ENCODE measurements at regions of chr11 and their contacts with region 1.

Region 1: GRCh38 chr11:100575870-100576705 is 111.0 kb upstream of the ARHGAP42 start:
- DNase-seq: peak in 1 of 2 experiments; percentile 64
- H3K4me3 ChIP-seq: no peak overlapping the region
- H3K4me3 Mint-ChIP-seq: no peak overlapping the region
- H3K27ac Mint-ChIP-seq: no peak overlapping the region
- H3K4me1 ChIP-seq: no peaks in the 10 kb centered on the region
- H3K4me1 Mint-ChIP-seq: no peaks in the 10 kb centered on the region
- H3K27me3 ChIP-seq: no peaks in the 10 kb centered on the region
- H3K27me3 Mint-ChIP-seq: peaks cover 2% of the 10 kb centered on the region
- CTCF ChIP-seq: peak; percentile 80 to 93

Region 2: GRCh38 chr11:99739464-99740089 is 836.5 kb before region 1 on chr11:
- CTCF ChIA-PET with region 1: no interaction called
- POLR2A ChIA-PET with region 1: no interaction called
- intact Hi-C with region 1: loop called (anchors 1 kb)
- DNase-seq: peak in 1 of 2 experiments; percentile 63
- H3K4me3 ChIP-seq: no peak overlapping the region
- H3K4me3 Mint-ChIP-seq: no peak overlapping the region
- H3K27ac Mint-ChIP-seq: no peak overlapping the region
- H3K4me1 ChIP-seq: no peaks in the 10 kb centered on the region
- H3K4me1 Mint-ChIP-seq: no peaks in the 10 kb centered on the region
- H3K27me3 ChIP-seq: no peaks in the 10 kb centered on the region
- H3K27me3 Mint-ChIP-seq: peaks cover 8% of the 10 kb centered on the region
- CTCF ChIP-seq: peak; percentile 77 to 85

Region 3: DNA sequence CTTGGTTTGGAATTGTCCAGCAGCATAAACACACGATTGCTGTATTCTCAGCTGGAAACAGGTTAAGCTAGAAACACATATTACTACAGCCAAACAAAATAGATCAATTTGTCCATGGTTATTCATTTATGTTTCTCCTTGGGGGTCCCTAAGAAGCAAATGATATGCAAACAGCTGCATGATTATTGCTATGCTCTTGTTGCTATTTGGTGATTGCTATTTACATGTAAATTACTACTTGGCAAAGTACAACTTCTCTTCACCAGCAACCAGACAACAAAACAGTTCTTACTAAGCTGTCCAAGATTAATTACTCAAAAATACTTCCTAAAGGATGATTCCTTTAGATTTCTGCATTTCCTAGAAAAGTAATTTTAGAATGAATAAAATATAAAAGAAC is 456.9 kb before region 1 on chr11:
- CTCF ChIA-PET with region 1: no interaction called
- POLR2A ChIA-PET with region 1: no interaction called
- intact Hi-C with region 1: loop called (anchors 1 kb)
- DNase-seq: no peak
- H3K4me3 ChIP-seq: no peak overlapping the region
- H3K4me3 Mint-ChIP-seq: no peak overlapping the region
- H3K27ac Mint-ChIP-seq: no peak overlapping the region
- H3K4me1 ChIP-seq: no peaks in the 10 kb centered on the region
- H3K4me1 Mint-ChIP-seq: no peaks in the 10 kb centered on the region
- H3K27me3 ChIP-seq: no peaks in the 10 kb centered on the region
- H3K27me3 Mint-ChIP-seq: peaks cover 3% of the 10 kb centered on the region
- CTCF ChIP-seq: no peak

Region 4: GRCh38 chr11:100328658-100329315 is 247.3 kb before region 1 on chr11:
- CTCF ChIA-PET with region 1: no interaction called
- POLR2A ChIA-PET with region 1: no interaction called
- intact Hi-C with region 1: loop called (anchors 1 kb)
- DNase-seq: peak; percentile 23 to 38
- H3K4me3 ChIP-seq: no peak overlapping the region
- H3K4me3 Mint-ChIP-seq: no peak overlapping the region
- H3K27ac Mint-ChIP-seq: no peak overlapping the region
- H3K4me1 ChIP-seq: no peaks in the 10 kb centered on the region; the same call in 1 of the 2 replicates
- H3K4me1 Mint-ChIP-seq: no peaks in the 10 kb centered on the region
- H3K27me3 ChIP-seq: no peaks in the 10 kb centered on the region
- H3K27me3 Mint-ChIP-seq: peaks cover 2% of the 10 kb centered on the region
- CTCF ChIP-seq: no peak

Region 5: GRCh38 chr11:100525635-100526034 is 50.5 kb before region 1 on chr11:
- CTCF ChIA-PET with region 1: no interaction called
- POLR2A ChIA-PET with region 1: no interaction called
- intact Hi-C with region 1: no loop called
- DNase-seq: peak in 1 of 2 experiments; percentile 35
- H3K4me3 ChIP-seq: no peak overlapping the region
- H3K4me3 Mint-ChIP-seq: no peak overlapping the region
- H3K27ac Mint-ChIP-seq: no peak overlapping the region
- H3K4me1 ChIP-seq: no peaks in the 10 kb centered on the region
- H3K4me1 Mint-ChIP-seq: no peaks in the 10 kb centered on the region
- H3K27me3 ChIP-seq: no peaks in the 10 kb centered on the region
- H3K27me3 Mint-ChIP-seq: no peaks in the 10 kb centered on the region
- CTCF ChIP-seq: peak; percentile 19 to 44

Region 6: DNA sequence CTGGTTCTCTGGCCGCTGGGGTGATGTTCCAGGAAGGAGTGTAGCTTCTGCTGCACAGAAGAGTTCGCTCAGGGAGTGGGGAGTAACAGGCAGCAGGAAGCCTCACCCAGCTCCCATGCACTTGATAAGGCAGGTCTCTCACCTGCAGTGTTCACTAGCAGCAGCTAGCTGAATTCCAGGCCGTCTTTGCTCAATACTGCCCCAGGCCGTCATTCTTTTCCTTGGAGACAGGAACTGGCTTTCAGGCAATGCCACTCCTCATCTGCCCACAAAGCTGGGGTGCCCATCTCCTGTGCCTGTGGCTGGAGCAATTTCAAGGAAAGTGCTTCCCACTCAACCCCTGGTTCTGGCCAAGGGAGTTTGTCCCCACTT is 177.1 kb after region 1 on chr11:
- CTCF ChIA-PET with region 1: no interaction called
- POLR2A ChIA-PET with region 1: no interaction called
- intact Hi-C with region 1: loop called (anchors 5 kb)
- DNase-seq: peak; percentile 85 to 89
- H3K4me3 ChIP-seq: no peak overlapping the region
- H3K4me3 Mint-ChIP-seq: no peak overlapping the region
- H3K27ac Mint-ChIP-seq: peak overlapping the region; percentile 81
- H3K4me1 ChIP-seq: peaks cover 33% of the 10 kb centered on the region
- H3K4me1 Mint-ChIP-seq: peaks cover 16% of the 10 kb centered on the region
- H3K27me3 ChIP-seq: no peaks in the 10 kb centered on the region
- H3K27me3 Mint-ChIP-seq: no peaks in the 10 kb centered on the region
- CTCF ChIP-seq: peak in 1 of 2 experiments; percentile 35

Region 7: GRCh38 chr11:100855466-100856067 is 279.5 kb after region 1 on chr11:
- CTCF ChIA-PET with region 1: interaction called, 4 read pairs
- POLR2A ChIA-PET with region 1: no interaction called
- intact Hi-C with region 1: loop called (anchors 1 kb)
- DNase-seq: peak in 1 of 2 experiments; percentile 65
- H3K4me3 ChIP-seq: no peak overlapping the region
- H3K4me3 Mint-ChIP-seq: no peak overlapping the region
- H3K27ac Mint-ChIP-seq: no peak overlapping the region
- H3K4me1 ChIP-seq: peaks cover 32% of the 10 kb centered on the region
- H3K4me1 Mint-ChIP-seq: peaks cover 27% of the 10 kb centered on the region
- H3K27me3 ChIP-seq: no peaks in the 10 kb centered on the region
- H3K27me3 Mint-ChIP-seq: no peaks in the 10 kb centered on the region
- CTCF ChIP-seq: peak; percentile 64 to 81

Region 8: DNA sequence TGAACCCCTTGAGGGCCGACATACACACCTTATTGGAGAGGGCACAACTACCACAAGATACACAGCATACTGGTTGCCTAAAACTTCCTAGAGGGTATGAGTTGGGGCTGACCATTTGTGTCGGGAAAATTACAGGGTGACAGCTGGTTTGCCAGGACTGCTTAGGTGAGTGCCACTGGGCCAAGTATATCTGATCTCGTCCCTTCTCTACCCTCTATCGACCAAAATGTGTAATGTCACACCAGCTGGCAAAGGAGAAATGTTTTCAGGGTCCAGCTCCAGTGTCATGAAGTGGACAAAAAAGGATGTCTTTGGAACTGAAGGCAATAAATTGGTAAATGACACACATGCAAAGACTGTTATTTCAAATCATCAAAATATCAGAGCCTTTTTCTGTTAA is 427.4 kb after region 1 on chr11:
- CTCF ChIA-PET with region 1: no interaction called
- POLR2A ChIA-PET with region 1: no interaction called
- intact Hi-C with region 1: loop called (anchors 5 kb)
- DNase-seq: peak in 1 of 2 experiments; percentile 42
- H3K4me3 ChIP-seq: no peak overlapping the region
- H3K4me3 Mint-ChIP-seq: no peak overlapping the region
- H3K27ac Mint-ChIP-seq: no peak overlapping the region
- H3K4me1 ChIP-seq: no peaks in the 10 kb centered on the region
- H3K4me1 Mint-ChIP-seq: no peaks in the 10 kb centered on the region
- H3K27me3 ChIP-seq: no peaks in the 10 kb centered on the region
- H3K27me3 Mint-ChIP-seq: peaks cover 19% of the 10 kb centered on the region
- CTCF ChIP-seq: peak; percentile 38 to 47